Activated naive CD4-positive, alpha-beta T cell treated with anti-CD3 and anti-CD28 coated beads for 36 hours (primary cell): ENCODE measurements at regions of chr2 and their contacts with region 1.

Region 1: DNA sequence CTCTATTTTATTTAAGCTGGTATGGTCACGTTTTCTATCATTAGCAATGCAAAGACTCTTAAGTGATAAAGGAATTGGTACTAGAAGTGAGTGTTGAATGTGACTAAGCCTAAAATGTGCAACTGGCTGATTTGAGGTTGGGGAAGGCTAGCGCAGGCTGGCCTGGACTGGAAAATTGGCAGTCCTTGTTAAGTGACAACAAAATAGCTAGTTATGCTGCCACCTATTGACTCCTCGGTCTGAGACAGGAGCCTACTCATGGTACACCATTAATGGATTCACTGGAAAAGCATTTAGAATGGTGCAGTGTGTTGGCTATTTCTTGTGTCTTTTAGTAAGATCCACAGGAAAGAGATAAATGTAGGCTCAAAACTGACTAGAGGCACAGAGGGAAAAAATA is 5.7 kb upstream of the WIPF1 start:
- DNase-seq: peak; percentile 85
- H3K4me3 Mint-ChIP-seq: no peak overlapping the region
- H3K27ac Mint-ChIP-seq: peak overlapping the region; percentile 76
- H3K4me1 Mint-ChIP-seq: peaks cover 81% of the 10 kb centered on the region
- H3K27me3 Mint-ChIP-seq: no peaks in the 10 kb centered on the region

Region 2: DNA sequence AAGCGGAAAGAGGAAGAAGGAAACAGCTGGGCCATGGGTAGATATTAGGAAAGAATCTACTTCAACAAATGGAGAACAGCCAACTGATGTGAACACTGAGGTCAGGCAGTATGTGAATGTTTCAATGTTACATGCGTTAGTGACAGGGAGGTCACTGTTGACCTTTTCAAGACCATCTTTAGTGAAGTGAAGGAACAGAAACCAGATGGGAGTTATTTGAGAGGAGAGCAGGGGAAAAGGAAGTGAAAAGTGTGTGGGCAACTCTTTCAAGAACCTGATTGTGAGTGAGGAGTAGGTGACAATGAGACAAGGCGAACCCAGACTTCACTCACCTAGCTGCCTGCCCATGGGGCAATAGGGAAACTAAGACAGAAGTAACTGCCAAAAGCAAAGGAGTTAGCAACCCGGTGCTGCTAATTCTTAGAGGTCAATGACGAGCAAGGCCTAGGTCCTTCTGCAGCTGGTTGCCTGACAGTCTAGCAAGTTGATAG is 705.1 kb before region 1 on chr2:
- CTCF ChIA-PET with region 1: no interaction called
- intact Hi-C with region 1: no loop called
- DNase-seq: no peak
- H3K4me3 Mint-ChIP-seq: no peak overlapping the region
- H3K27ac Mint-ChIP-seq: no peak overlapping the region
- H3K4me1 Mint-ChIP-seq: peaks cover 16% of the 10 kb centered on the region
- H3K27me3 Mint-ChIP-seq: no peaks in the 10 kb centered on the region

Region 3: GRCh38 chr2:174180837-174181236 is 422.4 kb before region 1 on chr2:
- CTCF ChIA-PET with region 1: no interaction called
- intact Hi-C with region 1: no loop called
- DNase-seq: no peak
- H3K4me3 Mint-ChIP-seq: no peak overlapping the region
- H3K27ac Mint-ChIP-seq: no peak overlapping the region
- H3K4me1 Mint-ChIP-seq: no peaks in the 10 kb centered on the region
- H3K27me3 Mint-ChIP-seq: no peaks in the 10 kb centered on the region

Region 4: DNA sequence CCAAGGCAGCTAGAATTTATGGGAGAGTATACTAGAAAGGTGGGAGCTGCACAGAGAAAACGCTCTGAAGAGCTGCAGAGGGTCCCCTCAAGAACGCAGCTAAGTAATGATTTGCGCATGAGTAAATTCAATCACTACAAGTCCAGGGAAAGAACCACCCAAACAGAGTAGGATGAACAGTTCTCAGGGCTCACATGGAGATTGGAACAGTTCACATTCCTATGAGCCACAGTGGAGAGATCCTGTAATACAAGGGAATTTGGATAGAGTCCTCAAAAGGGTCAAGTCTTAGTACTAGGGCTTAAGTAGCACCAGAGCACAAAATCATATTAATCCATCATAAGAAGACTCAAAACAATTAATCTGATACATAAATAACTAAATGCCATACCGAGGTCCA is 367.6 kb before region 1 on chr2:
- CTCF ChIA-PET with region 1: no interaction called
- intact Hi-C with region 1: no loop called
- DNase-seq: no peak
- H3K4me3 Mint-ChIP-seq: no peak overlapping the region
- H3K27ac Mint-ChIP-seq: no peak overlapping the region
- H3K4me1 Mint-ChIP-seq: peaks cover 22% of the 10 kb centered on the region
- H3K27me3 Mint-ChIP-seq: no peaks in the 10 kb centered on the region

Region 5: DNA sequence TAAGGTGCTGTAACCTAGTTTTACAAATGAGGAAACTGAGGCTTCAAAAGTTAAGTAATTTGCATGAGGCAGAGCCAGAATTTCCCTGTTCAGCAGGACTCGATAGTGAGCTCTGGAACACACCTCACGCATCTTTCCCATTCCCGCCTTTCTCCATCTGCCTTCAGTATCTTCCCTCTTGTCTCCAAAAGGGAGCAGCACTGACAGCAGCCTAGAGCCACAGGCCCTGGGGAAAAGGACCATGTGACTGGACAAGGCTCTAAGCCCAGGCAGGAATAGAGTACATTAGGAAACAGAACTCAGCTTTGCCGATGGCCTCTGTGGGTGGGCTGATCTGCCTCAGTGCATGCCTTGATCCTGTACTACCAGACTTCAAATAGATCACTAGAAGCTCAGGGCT is 138.0 kb before region 1 on chr2:
- CTCF ChIA-PET with region 1: interaction called, 17 read pairs
- intact Hi-C with region 1: loop called (anchors 1 kb)
- DNase-seq: no peak
- H3K4me3 Mint-ChIP-seq: no peak overlapping the region
- H3K27ac Mint-ChIP-seq: no peak overlapping the region
- H3K4me1 Mint-ChIP-seq: no peaks in the 10 kb centered on the region
- H3K27me3 Mint-ChIP-seq: no peaks in the 10 kb centered on the region

Region 6: DNA sequence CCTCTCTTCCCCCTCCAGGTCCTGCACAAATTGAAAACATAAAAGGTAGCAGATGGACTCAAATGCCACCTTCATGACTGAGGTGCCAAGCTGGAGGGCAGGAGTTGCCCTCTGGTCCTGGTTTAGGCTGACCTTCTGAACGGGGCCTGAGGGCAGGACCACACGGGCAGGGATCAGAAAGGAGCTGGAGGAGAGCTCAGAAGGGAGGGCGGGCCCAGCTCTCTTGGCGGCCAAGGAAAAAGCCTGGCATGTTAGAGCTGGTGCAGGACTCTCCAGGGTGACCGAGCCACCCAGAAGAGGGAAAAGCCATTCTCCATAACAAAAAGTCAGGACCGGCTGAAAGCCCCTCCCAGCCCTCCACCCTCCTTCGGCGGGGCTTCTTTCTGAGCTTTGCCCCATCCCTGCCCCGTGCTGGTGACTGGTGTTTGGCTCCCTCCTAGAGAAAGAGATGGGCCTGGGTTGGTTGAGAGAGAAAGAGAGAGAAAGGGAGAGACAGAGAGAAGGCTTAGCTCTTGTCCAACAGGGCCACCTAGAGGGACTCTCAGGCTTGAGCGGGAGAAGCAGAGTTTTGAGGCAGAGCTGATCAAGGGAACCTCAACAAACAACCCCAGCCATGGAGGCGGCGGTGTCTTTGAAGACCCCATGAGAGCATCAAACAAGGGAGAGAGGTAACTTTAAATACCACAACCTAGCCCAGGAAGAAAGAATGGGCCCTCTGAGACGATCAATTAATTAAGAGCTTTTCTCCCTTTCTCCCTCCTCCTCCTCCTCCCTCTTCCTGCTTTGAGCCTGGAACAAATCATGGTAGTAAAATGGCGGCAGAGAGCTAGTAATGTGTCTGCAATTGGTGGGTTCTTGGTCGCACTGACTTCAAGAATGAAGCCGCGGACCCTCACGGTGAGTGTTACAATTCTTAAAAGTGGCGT is 56.4 kb before region 1 on chr2:
- CTCF ChIA-PET with region 1: interaction called, 3 read pairs
- intact Hi-C with region 1: loop called (anchors 2 kb)
- DNase-seq: peak; percentile 74
- H3K4me3 Mint-ChIP-seq: no peak overlapping the region
- H3K27ac Mint-ChIP-seq: peak overlapping the region; percentile 3
- H3K4me1 Mint-ChIP-seq: peaks cover 9% of the 10 kb centered on the region
- H3K27me3 Mint-ChIP-seq: no peaks in the 10 kb centered on the region

Region 7: GRCh38 chr2:174617120-174617519 is 13.8 kb after region 1 on chr2:
- CTCF ChIA-PET with region 1: interaction called, 8 read pairs
- intact Hi-C with region 1: loop called (anchors 1 kb)
- DNase-seq: no peak
- H3K4me3 Mint-ChIP-seq: no peak overlapping the region
- H3K27ac Mint-ChIP-seq: peak overlapping the region; percentile 86
- H3K4me1 Mint-ChIP-seq: peaks cover 78% of the 10 kb centered on the region
- H3K27me3 Mint-ChIP-seq: no peaks in the 10 kb centered on the region

Region 8: GRCh38 chr2:174682578-174683391 is 79.5 kb after region 1 on chr2:
- CTCF ChIA-PET with region 1: interaction called, 87 read pairs
- intact Hi-C with region 1: loop called (anchors 1 kb)
- DNase-seq: peak; percentile 49
- H3K4me3 Mint-ChIP-seq: peak overlapping the region; percentile 84
- H3K27ac Mint-ChIP-seq: peak overlapping the region; percentile 83
- H3K4me1 Mint-ChIP-seq: peaks cover 50% of the 10 kb centered on the region
- H3K27me3 Mint-ChIP-seq: no peaks in the 10 kb centered on the region